ENCODE measurements at regions of chr1 and their contacts with region 1.

Region 1: GRCh38 chr1:113835642-113836307 is 23.5 kb upstream of the RSBN1 start:
- DNase-seq: peak; percentile 4 to 36
- ATAC-seq: no peak
- H3K4me3 ChIP-seq: no peak overlapping the region
- H3K27ac ChIP-seq: no peak overlapping the region
- H3K4me1 ChIP-seq: no peaks in the 10 kb centered on the region
- CTCF ChIP-seq: peak; percentile 44
- EP300 ChIP-seq: no peak
- POLR2A ChIP-seq: no peak
- RAD21 ChIP-seq: peak; percentile 56 to 61; a peak in 3 of 5 replicates

Region 2: DNA sequence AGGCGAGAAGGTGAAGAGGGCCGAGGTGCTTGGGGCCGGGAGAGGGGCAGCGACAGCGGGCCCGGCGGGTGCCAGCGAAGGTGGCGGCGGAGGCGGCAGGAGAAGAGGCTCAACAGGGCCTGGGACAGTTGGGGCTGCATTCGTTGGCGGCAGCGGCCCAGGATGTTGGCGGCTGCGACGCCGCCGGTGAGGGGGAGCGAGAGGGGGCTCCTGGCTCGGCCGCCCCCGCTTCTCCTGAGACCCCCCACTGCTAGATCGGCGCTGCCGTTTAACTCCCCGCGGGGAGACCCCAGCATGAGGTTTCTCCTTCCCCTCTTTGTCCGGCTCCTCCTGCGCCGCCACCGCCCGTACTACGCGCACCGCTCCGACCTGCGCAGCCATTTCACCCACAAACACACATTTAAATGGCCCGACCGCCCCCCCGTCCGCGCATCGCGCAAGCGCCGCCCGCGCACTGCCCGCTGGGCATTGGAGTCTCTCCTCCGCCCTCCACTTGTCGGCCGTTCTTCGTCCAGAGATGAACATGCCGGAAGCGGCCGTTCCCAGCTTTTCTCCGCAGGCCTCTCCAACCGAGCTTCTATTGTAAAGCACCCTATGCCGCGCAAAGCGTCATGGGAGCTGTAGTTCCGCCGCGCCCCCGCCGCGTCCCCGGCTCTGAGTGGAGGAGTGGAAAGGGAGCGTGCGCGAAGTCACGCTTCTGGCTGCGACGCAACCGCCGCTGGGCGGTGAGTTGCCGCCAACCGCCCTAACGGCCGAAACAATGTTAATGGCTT is 23.7 kb before region 1 on chr1 and contains the start of gene RSBN1:
- CTCF ChIA-PET with region 1: no interaction called
- POLR2A ChIA-PET with region 1: no interaction called
- DNase-seq: peak; percentile 85 to 98
- ATAC-seq: peak; percentile 98 to 99
- H3K4me3 ChIP-seq: peak within 1 kb of the TSS; percentile 90
- H3K27ac ChIP-seq: peak within 1 kb of the TSS; percentile 89 to 97
- H3K4me1 ChIP-seq: peaks cover 20% of the 10 kb centered on the region; the same call in 2 of the 3 replicates
- CTCF ChIP-seq: no peak
- EP300 ChIP-seq: no peak
- POLR2A ChIP-seq: peak; percentile 82
- RAD21 ChIP-seq: no peak
- polyA plus RNA-seq, gene RSBN1: 8.8 and 9.7 TPM in 2 replicates

Region 3: GRCh38 chr1:113904674-113905434 is 69.1 kb after region 1 on chr1 and contains the starts of genes AP4B1 and DCLRE1B:
- CTCF ChIA-PET with region 1: interaction called, 11 read pairs
- POLR2A ChIA-PET with region 1: no interaction called
- DNase-seq: peak; percentile 86 to 99
- ATAC-seq: peak; percentile 95 to 96
- H3K4me3 ChIP-seq: peak within 1 kb of the TSS; percentile 77
- H3K27ac ChIP-seq: peak within 1 kb of the TSS; percentile 83 to 92
- H3K4me1 ChIP-seq: peaks cover 9% of the 10 kb centered on the region; the same call in 1 of the 3 replicates
- CTCF ChIP-seq: peak; percentile 40
- EP300 ChIP-seq: no peak
- POLR2A ChIP-seq: peak; percentile 76
- RAD21 ChIP-seq: peak; percentile 61 to 76
- polyA plus RNA-seq, gene AP4B1: 11.9 and 12.0 TPM in 2 replicates
- polyA plus RNA-seq, gene DCLRE1B: 4.8 and 6.3 TPM in 2 replicates